ENCODE measurements at regions of chr7 and their contacts with region 1.

Region 1: DNA sequence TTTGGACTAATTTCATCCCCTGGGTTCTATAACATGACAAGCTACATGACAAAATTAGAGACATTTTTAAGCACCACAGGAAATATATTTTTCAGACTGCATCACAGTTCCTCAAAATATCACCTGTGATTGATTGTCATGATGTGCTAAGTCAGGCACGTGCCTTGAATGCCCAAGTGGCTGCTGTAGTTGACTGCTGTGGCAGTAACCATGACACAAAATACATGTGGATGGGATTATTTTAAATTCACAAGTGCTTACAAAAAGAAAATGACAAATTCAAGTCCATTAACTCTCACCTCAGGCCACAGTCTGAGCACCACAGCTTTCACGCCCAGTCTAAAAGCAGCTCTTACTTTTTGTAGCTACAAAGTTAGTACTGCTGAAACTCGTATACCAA is 45.5 kb downstream of the TNPO3 start:
- DNase-seq: peak; percentile 91
- H3K4me3 ChIP-seq: peak overlapping the region; percentile 48
- H3K27ac ChIP-seq: peak overlapping the region; percentile 95
- H3K4me1 ChIP-seq: peaks cover 67% of the 10 kb centered on the region
- CTCF ChIP-seq: no peak

Region 2: DNA sequence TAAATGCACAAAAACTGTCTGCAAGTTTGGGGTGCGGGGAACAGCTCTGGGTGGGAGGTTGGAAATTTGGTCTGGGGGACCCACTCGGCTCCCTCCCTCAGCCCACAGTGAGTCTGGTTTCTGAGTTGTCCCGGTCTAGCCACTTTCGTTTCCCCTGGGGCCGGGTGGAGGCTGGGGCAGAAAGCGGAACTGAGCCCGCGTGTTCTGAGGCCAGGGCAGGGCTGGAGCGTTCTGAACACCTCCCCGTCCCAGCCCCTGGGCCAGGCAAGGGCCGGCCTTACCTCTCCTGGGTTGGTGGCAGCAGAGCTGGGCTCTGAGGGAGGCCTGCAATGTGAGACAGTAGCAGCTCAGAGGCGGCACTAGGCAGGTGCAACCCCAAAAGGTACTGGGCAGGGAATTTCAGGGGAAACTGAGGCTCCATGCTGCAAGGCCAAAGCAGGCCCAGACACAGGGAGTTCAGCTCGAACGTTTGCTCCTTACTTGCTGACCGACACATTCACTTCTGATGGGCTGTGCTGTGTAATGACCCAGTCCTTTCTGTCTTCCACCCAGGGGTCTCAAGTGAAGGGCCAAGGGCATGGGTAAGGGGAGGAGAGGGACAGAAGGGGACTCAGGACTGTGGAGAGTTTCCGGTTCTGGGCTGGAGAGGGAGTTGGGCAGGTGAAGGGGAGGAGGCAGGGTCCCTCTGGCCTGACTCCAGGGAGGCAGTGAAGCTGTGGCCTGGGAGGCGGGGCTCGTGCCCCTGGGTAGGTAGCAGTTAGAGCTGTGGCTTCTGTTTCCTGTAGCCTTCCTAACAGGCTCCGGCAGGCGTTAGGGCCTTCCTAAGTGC is 68.7 kb before region 1 on chr7:
- CTCF ChIA-PET with region 1: no interaction called
- POLR2A ChIA-PET with region 1: interaction called, 12 read pairs
- intact Hi-C with region 1: loop called (anchors 1 kb)
- DNase-seq: peak; percentile 93
- H3K4me3 ChIP-seq: peak overlapping the region; percentile 60
- H3K27ac ChIP-seq: peak overlapping the region; percentile 75
- H3K4me1 ChIP-seq: peaks cover 37% of the 10 kb centered on the region
- CTCF ChIP-seq: 0 out of 2 replicates have a peak, but pooled peaks have one; percentile 4

Region 3: DNA sequence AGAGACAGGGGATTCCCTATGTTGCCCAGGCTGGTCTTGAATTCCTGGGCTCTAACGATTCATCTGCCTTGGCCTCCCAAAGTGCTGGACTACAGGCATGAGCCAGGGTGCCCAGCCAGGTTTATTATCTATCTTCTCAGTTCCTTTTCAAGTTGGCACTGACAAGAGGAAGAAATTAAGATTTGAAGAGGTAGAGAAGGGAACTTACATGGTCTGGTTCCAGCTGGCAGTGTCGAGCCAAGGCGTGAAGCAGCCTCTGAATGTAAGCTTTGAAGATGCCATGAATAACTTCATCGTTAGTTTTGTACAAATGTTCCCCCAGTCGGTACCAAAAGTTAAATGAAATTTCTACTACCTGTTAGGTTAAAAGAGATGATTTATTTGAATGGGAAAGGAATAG is 12.3 kb before region 1 on chr7:
- CTCF ChIA-PET with region 1: no interaction called
- POLR2A ChIA-PET with region 1: interaction called, 11 read pairs
- intact Hi-C with region 1: no loop called
- DNase-seq: no peak
- H3K4me3 ChIP-seq: no peak overlapping the region
- H3K27ac ChIP-seq: no peak overlapping the region
- H3K4me1 ChIP-seq: no peaks in the 10 kb centered on the region
- CTCF ChIP-seq: no peak

Region 4: GRCh38 chr7:129030440-129030839 is 21.0 kb after region 1 on chr7:
- CTCF ChIA-PET with region 1: no interaction called
- POLR2A ChIA-PET with region 1: interaction called, 16 read pairs
- intact Hi-C with region 1: no loop called
- DNase-seq: no peak
- H3K4me3 ChIP-seq: no peak overlapping the region
- H3K27ac ChIP-seq: no peak overlapping the region
- H3K4me1 ChIP-seq: peaks cover 3% of the 10 kb centered on the region
- CTCF ChIP-seq: no peak

Region 5: DNA sequence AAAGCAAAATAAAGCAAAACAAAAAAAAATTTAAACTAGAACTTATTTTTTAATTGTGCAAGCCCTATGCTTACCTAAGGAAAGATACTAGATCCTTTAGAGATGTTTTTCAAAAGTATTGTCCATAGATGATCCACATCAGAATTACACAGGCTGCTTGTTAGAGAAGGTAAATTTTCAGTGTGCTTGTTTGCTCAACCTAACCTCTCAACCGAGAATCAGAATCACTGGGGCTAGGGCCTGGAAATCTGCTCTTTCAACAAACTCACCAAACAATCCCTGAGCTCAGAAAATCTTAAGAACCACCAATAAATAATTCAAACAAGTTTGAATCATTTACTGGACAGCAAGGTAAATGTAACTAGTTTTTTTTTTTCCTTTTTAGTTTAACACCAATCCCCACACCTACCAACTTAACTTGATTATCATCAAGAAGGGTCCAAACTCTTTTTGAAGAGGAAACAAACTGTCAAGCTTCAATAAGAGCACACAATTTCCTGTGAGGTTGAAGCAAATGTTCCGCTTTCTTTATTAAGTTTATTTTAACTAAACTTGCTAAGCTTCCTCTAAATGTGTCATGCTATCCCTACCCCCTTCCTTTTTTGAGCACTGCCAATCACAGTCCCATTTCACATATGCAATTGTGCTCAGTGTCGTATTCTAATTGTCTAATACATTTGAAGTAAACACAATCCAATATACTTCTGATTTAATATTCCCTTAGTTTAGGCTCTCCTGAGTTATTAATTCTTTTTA is 127.6 kb after region 1 on chr7:
- CTCF ChIA-PET with region 1: no interaction called
- POLR2A ChIA-PET with region 1: interaction called, 3 read pairs
- intact Hi-C with region 1: loop called (anchors 5 kb)
- DNase-seq: peak; percentile 81
- H3K4me3 ChIP-seq: peak overlapping the region; percentile 43
- H3K27ac ChIP-seq: peak overlapping the region; percentile 89
- H3K4me1 ChIP-seq: peaks cover 44% of the 10 kb centered on the region
- CTCF ChIP-seq: no peak